Vagina (tissue), 2 donors: ENCODE measurements at regions of chr11 and their contacts with region 1.

Region 1: DNA sequence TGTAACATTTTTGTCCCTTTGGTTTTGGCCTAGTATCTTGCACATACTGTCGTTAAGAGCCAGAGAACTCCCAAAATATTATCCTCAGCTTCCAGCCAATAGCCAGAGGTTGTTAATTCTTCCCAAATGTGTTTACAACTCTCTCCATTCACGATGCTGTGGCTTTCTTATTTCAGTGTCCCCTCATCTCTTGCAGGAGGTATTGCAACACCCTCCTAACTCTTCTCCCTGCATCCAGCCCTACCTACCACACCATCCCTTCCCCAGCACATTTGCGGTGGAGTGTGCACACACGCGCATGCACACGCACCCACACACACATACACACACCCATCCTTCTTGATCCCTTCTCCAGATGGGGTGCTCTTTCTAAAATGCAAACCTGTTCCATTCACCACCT is 75.6 kb upstream of the LMO2 start:
- DNase-seq: no peak
- H3K4me3 ChIP-seq: no peak overlapping the region
- H3K27ac ChIP-seq: no peak overlapping the region
- H3K4me1 ChIP-seq: no peaks in the 10 kb centered on the region
- H3K27me3 ChIP-seq: no peaks in the 10 kb centered on the region
- CTCF ChIP-seq: no peak
- POLR2A ChIP-seq: no peak

Region 2: DNA sequence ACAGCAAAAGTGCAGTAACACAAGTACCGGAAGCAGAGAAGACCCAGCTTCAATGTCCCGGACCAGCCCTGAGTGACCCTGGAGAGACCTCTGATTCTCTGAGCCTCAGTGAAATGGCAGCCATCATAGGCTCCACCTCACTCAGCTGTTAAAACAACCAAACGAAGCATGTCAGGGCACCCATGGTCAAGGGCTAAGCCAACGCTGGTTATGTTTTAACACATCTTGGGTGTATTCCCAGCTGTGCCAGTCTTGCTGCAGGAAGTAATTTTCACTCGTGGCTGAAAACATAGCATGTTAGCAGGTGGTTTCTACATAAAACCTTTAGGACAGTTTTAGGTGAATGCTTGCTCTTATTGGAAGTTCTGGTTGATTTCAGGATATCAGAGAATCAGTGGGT is 106.5 kb before region 1 on chr11:
- intact Hi-C with region 1: loop called (anchors 2 kb)
- DNase-seq: no peak
- H3K4me3 ChIP-seq: no peak overlapping the region
- H3K27ac ChIP-seq: no peak overlapping the region
- H3K4me1 ChIP-seq: peaks cover 20% of the 10 kb centered on the region
- H3K27me3 ChIP-seq: no peaks in the 10 kb centered on the region
- CTCF ChIP-seq: no peak
- POLR2A ChIP-seq: no peak